HEK293 (cell line): ENCODE measurements at regions of chr3 and their contacts with region 1.

Region 1: DNA sequence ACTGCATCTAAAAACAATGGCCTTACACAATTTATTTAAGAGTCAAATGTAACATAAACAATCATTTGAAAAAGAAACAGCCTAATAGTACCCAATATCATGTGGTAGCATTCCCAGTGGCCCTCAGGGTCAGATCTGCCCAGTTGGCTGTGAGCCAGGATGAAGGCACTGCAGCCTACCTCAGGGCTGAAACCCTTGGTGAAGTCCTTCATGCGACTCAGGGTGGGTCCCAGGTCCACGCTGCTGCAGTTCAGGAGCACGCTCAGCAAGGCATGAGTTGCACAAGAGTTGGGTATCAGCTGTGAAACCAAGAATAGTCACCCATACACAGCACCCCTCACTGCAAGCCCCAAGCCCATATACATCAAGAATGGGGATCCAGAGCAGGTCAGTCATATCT is 37.1 kb downstream of the SEMA3G start:
- H3K4me3 ChIP-seq: no peak overlapping the region
- H3K27ac ChIP-seq: no peak overlapping the region
- H3K4me1 ChIP-seq: 0 out of 2 replicates have a peak, but pooled peaks cover 3% of the 10 kb centered on the region
- CTCF ChIP-seq: no peak

Region 2: DNA sequence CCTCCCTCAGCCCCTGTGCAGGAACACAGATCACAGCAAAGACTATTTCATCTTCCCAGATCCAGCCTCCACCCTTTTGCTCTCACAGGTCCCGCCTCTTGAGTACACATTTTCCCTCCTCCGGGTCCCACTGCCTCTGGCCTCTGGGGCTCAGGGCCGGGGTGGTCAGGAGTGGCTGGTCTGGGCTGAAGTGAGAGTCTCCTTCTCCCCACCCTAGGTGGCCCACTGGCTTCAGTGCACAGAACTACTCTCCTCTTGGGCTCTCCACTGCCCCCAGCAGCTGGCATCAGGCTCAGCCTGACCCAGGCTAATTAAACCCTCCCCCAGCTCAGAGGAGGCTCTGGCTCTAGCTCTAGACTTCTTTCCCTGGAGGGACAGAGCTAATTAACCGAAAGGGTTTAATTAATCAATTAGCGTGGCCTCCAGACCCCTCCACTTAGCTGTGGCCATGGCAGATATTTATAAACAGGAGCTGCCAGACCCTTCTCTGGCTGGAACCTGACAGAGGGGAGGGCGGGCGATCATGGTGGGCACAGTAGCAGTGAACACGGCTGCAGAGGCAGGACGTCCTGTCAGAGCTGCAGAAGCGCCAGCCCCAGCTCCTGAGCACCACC is 366.6 kb before region 1 on chr3:
- CTCF ChIA-PET with region 1: no interaction called
- POLR2A ChIA-PET with region 1: no interaction called
- H3K4me3 ChIP-seq: no peak overlapping the region
- H3K27ac ChIP-seq: no peak overlapping the region
- H3K4me1 ChIP-seq: no peaks in the 10 kb centered on the region
- CTCF ChIP-seq: peak; percentile 48; the same call in 1 of the 2 replicates

Region 3: GRCh38 chr3:52190294-52191074 is 217.3 kb before region 1 on chr3:
- CTCF ChIA-PET with region 1: no interaction called
- POLR2A ChIA-PET with region 1: no interaction called
- H3K4me3 ChIP-seq: no peak overlapping the region
- H3K27ac ChIP-seq: no peak overlapping the region
- H3K4me1 ChIP-seq: no peaks in the 10 kb centered on the region
- CTCF ChIP-seq: no peak

Region 4: GRCh38 chr3:52423173-52423572 is 15.4 kb after region 1 on chr3:
- CTCF ChIA-PET with region 1: interaction called, 16 read pairs
- POLR2A ChIA-PET with region 1: no interaction called
- H3K4me3 ChIP-seq: no peak overlapping the region
- H3K27ac ChIP-seq: no peak overlapping the region
- H3K4me1 ChIP-seq: no peaks in the 10 kb centered on the region
- CTCF ChIP-seq: no peak

Region 5: DNA sequence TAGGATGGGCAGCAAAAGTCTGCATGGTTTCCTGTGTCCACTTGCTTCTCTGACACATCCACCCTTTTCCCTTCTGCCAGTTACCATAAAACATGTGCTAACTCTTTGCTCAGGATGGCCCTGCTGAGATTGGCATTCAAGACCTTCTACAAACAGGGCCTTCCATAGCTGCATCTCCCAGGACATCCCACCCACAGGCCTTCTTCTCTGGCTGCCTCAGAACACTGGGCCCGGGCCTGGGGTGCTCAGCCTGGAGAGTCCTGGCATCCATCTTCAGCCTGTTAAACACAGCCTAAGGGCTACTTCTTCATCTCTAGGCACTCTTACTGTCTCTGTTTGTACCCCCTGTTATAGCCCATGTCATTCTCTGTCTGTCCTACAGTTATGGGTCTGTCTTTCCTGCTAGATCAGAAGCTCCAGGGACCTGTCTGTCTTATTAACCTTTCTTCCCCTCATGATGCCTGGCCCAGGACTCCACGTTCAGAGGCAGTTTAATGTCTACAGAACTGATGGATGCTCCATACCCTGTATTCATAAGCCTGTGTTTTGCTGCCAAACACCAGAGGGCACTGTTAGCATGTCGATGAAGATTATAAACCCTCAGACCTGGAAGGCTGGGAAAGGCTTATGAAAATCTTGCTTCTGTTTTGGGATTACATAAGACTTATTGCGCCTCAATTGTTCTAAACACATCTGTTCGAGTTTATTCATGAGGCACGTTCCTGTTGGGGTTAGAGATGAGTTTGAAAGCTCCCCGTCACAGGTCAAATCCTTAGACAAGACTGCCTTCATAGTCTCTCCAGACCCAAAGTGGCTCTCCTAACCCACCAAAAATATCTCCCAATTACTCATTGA is 20.6 kb after region 1 on chr3:
- CTCF ChIA-PET with region 1: interaction called, 16 read pairs
- POLR2A ChIA-PET with region 1: no interaction called
- H3K4me3 ChIP-seq: no peak overlapping the region
- H3K27ac ChIP-seq: no peak overlapping the region
- H3K4me1 ChIP-seq: no peaks in the 10 kb centered on the region
- CTCF ChIP-seq: peak; percentile 27; the same call in 1 of the 2 replicates

Region 6: GRCh38 chr3:52444860-52445793 is 37.3 kb after region 1 on chr3 and contains the start of gene SEMA3G:
- CTCF ChIA-PET with region 1: interaction called, 65 read pairs
- POLR2A ChIA-PET with region 1: no interaction called
- H3K4me3 ChIP-seq: no peak within 1 kb of the TSS
- H3K27ac ChIP-seq: no peak within 1 kb of the TSS
- H3K4me1 ChIP-seq: no peaks in the 10 kb centered on the region
- CTCF ChIP-seq: peak; percentile 64

Region 7: GRCh38 chr3:52645549-52645948 is 237.8 kb after region 1 on chr3:
- CTCF ChIA-PET with region 1: no interaction called
- POLR2A ChIA-PET with region 1: no interaction called
- H3K4me3 ChIP-seq: no peak overlapping the region
- H3K27ac ChIP-seq: no peak overlapping the region
- H3K4me1 ChIP-seq: no peaks in the 10 kb centered on the region
- CTCF ChIP-seq: no peak